Dorsolateral prefrontal cortex (tissue), 120 donors: ENCODE measurements at regions of chr12 and their contacts with region 1.

Region 1: DNA sequence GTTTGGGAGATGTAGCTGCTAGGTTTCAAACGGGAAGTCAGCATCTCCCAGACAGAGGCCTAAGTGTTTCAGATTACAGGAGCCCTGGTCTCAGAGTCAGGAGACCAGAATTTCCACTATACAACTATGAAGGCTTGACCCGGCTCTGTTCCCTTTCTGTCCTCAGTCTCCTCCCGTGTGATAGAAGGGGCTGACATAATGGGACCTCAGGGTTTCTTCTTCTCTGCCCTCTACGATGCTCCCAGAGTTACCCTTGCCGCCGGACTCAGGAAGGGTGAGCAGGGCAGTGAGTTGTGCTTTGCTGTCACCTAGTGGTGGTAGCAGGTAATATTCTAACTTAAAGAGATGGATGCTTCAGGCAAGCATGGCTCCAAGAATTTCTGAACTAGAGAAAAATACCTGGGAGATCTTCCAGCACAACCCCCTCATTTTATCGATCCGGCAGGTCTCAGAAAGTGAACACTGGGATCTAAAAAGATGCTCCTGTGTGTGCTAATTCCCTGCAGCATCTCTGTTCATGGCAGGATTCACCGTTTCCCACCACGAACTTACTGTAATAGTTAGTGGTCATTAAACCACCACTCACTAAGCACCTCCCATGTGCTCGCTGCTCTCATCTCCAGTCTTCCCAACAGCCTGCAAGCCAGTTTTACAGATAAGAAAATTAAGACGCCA is 84.4 kb downstream of the VWF start:
- DNase-seq: peak in 5 of 10 donors; percentile 43 to 64 (median 58)
- H3K4me3 ChIP-seq: peak overlapping the region in 1 of 59 donors; percentile 28
- H3K27ac ChIP-seq: peak overlapping the region in 1 of 59 donors; percentile 29
- H3K27me3 ChIP-seq: no peaks in the 10 kb centered on the region
- CTCF ChIP-seq: peak; percentile 83 to 98 (median 92)

Region 2: DNA sequence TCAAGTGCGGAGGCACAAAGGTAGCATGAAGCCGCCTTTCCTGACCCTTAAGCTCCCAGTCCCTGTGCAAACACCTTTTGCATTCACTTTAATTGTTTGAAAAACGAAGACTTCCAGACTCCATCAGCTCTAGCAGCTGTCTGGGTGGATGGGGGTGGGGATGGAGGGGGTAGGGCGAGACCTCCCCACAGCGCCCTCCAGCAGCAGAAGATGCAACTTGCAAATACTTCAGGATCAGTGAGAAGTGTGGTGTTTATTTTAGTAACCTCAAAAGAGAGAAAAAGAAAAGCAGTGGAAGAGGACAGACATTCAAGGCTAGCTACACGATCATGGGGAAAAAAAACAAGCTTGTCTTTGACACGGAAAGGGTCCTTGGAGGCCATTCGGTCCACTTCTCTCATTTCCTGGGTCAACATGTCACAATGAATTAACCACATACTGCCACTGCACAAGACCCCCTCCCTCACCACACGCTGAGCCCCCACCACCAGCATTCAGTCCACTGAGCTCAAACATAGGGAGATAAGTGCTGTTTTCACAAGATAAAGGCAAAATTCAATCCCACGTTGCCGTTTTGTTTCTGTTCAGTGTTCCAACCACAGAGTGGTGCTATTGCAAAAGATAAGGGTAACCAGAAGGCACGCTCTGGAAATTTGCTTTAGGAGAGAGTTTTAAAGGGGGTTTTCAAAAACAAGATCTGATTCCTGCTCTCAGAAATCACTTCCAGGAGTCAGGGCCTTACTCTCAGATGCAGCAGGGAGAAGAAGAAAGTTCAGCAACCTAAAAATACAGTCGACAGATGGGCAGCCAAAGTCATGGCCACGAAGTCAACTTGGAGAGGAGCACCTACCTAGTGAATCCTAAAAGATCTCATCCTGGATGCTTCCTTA is 611.5 kb before region 1 on chr12:
- intact Hi-C with region 1: loop called in 1 of 2 experiments (anchors 5 kb)
- DNase-seq: no peak
- H3K4me3 ChIP-seq: peak overlapping the region in 2 of 59 donors; percentile 12 to 20
- H3K27ac ChIP-seq: no peak overlapping the region
- H3K27me3 ChIP-seq: peaks cover 0 to 84% (median 61%) of the 10 kb centered on the region in 45 donors
- CTCF ChIP-seq: peak in 50 of 56 donors; percentile 10 to 72 (median 45)

Region 3: GRCh38 chr12:5745265-5745888 is 294.7 kb before region 1 on chr12:
- intact Hi-C with region 1: loop called in 1 of 2 experiments (anchors 10 kb)
- DNase-seq: peak in 7 of 10 donors; percentile 17 to 63 (median 51)
- H3K4me3 ChIP-seq: no peak overlapping the region
- H3K27ac ChIP-seq: no peak overlapping the region
- H3K27me3 ChIP-seq: peaks cover 0 to 2% (median 0%) of the 10 kb centered on the region in 45 donors
- CTCF ChIP-seq: peak; percentile 24 to 82 (median 69)

Region 4: GRCh38 chr12:5941907-5942306 is 98.1 kb before region 1 on chr12:
- intact Hi-C with region 1: no loop called
- DNase-seq: no peak
- H3K4me3 ChIP-seq: no peak overlapping the region
- H3K27ac ChIP-seq: no peak overlapping the region
- H3K27me3 ChIP-seq: peaks cover 0 to 32% (median 15%) of the 10 kb centered on the region in 45 donors
- CTCF ChIP-seq: no peak

Region 5: GRCh38 chr12:5988659-5989116 is 51.3 kb before region 1 on chr12:
- intact Hi-C with region 1: loop called (anchors 2 kb)
- DNase-seq: peak; percentile 73 to 86 (median 80)
- H3K4me3 ChIP-seq: no peak overlapping the region
- H3K27ac ChIP-seq: no peak overlapping the region
- H3K27me3 ChIP-seq: peaks cover 0 to 5% (median 0%) of the 10 kb centered on the region in 45 donors
- CTCF ChIP-seq: peak; percentile 59 to 100 (median 96)